ENCODE measurements at regions of chr16 and their contacts with region 1.

Region 1: GRCh38 chr16:89217388-89218191 is at the start of gene ZNF778:
- DNase-seq: peak; percentile 80
- ATAC-seq: peak; percentile 86
- H3K4me3 Mint-ChIP-seq: peak within 1 kb of the TSS; percentile 91
- H3K27ac Mint-ChIP-seq: peak within 1 kb of the TSS; percentile 93
- H3K4me1 Mint-ChIP-seq: peaks cover 19% of the 10 kb centered on the region
- H3K27me3 Mint-ChIP-seq: no peaks in the 10 kb centered on the region
- CTCF ChIP-seq: no peak
- total RNA-seq, gene ZNF778: 7.2 and 11.4 TPM in 2 replicates

Region 2: GRCh38 chr16:88633684-88634140 is 583.9 kb before region 1 on chr16:
- CTCF ChIA-PET with region 1: no interaction called
- POLR2A ChIA-PET with region 1: no interaction called
- intact Hi-C with region 1: loop called (anchors 10 kb)
- DNase-seq: peak; percentile 64
- ATAC-seq: peak; percentile 54
- H3K4me3 Mint-ChIP-seq: peak overlapping the region; percentile 76
- H3K27ac Mint-ChIP-seq: peak overlapping the region; percentile 71
- H3K4me1 Mint-ChIP-seq: peaks cover 46% of the 10 kb centered on the region
- H3K27me3 Mint-ChIP-seq: no peaks in the 10 kb centered on the region
- CTCF ChIP-seq: no peak

Region 3: DNA sequence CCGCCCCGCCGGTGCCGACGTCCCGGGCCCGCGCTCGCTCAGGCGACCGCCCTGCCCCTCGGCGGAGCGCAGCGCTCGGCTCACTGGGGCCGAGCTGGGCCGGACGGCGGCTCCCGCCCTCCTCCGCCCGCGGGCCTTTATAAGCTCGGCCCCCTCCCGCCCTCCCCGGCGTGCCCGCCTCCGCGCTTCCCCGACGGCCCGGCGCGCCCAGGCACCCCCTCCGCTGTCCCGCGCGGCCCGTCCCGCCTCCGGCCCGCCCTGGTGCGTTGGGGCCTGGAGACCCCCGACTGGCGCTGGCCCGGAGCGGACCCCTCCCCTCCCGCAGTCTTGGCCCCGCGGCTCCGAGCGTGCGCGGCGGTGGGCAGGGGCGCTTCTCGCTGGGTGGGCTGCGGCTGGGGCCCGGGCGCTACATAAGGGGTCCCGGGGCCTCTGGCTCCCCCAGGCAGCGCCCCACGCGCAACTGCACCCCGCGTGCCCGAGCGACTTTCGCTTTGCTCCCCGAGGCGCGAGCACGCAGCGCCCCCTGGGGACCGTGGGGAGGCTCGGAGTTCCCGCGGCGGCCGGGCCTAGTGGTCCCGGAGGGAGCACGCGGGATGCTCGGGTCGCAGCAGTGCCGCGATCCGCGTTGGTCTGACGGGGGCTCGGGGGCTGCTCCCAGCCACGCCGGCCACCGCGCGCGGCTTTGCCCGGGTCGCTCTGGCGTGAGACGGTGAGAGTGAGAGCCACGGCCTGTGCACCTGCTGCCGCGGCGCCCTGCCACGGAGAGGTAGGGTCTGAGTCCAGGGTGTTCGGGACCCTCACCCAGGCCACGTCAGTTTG is 432.3 kb before region 1 on chr16 and contains the start of gene PIEZO1:
- CTCF ChIA-PET with region 1: no interaction called
- POLR2A ChIA-PET with region 1: no interaction called
- intact Hi-C with region 1: loop called (anchors 2 kb)
- DNase-seq: peak; percentile 78
- ATAC-seq: peak; percentile 28
- H3K4me3 Mint-ChIP-seq: peak within 1 kb of the TSS; percentile 85
- H3K27ac Mint-ChIP-seq: peak within 1 kb of the TSS; percentile 76
- H3K4me1 Mint-ChIP-seq: peaks cover 47% of the 10 kb centered on the region
- H3K27me3 Mint-ChIP-seq: no peaks in the 10 kb centered on the region
- CTCF ChIP-seq: no peak
- total RNA-seq, gene PIEZO1: 75.2 and 85.9 TPM in 2 replicates

Region 4: DNA sequence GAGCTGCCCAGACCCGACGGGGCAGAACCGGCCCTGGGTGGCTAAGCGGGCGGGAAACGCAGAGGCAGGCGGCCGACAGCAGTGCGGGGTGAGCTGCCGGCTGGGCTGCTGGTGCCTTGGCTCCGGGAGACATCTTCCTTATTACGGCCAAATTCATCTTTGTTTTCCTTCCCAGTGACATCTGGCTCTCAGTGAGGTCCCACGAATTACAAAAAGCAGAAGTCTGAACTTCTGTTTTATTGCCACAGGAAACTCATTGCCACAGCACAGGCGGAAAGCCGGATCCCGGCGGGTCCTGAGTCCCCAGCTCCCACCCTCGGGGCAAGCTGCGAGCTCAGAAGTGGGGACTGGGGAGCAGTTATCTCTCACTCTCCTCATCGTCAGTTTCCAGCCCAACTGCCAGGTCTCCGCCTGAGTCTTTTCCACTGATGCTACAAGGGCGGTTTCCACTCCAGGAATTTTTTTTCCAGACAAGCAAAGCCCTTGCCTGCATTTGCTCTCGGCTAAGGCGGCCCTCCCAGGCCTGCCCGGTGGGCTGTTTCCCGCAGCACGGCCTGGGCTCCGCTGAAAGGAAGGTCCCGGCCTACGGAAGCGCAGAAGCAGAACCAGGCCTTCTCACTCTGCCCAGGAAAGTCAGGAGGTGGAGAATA is 280.9 kb before region 1 on chr16:
- CTCF ChIA-PET with region 1: interaction called, 5 read pairs
- POLR2A ChIA-PET with region 1: interaction called, 3 read pairs
- intact Hi-C with region 1: loop called (anchors 1 kb)
- DNase-seq: no peak
- ATAC-seq: peak; percentile 25
- H3K4me3 Mint-ChIP-seq: peak overlapping the region; percentile 76
- H3K27ac Mint-ChIP-seq: peak overlapping the region; percentile 84
- H3K4me1 Mint-ChIP-seq: peaks cover 46% of the 10 kb centered on the region
- H3K27me3 Mint-ChIP-seq: no peaks in the 10 kb centered on the region
- CTCF ChIP-seq: no peak

Region 5: GRCh38 chr16:89115216-89115861 is 102.3 kb before region 1 on chr16:
- CTCF ChIA-PET with region 1: no interaction called
- POLR2A ChIA-PET with region 1: no interaction called
- intact Hi-C with region 1: loop called (anchors 2 kb)
- DNase-seq: peak; percentile 64
- ATAC-seq: peak; percentile 84
- H3K4me3 Mint-ChIP-seq: peak overlapping the region; percentile 78
- H3K27ac Mint-ChIP-seq: peak overlapping the region; percentile 95
- H3K4me1 Mint-ChIP-seq: peaks cover 9% of the 10 kb centered on the region
- H3K27me3 Mint-ChIP-seq: no peaks in the 10 kb centered on the region
- CTCF ChIP-seq: no peak

Region 6: DNA sequence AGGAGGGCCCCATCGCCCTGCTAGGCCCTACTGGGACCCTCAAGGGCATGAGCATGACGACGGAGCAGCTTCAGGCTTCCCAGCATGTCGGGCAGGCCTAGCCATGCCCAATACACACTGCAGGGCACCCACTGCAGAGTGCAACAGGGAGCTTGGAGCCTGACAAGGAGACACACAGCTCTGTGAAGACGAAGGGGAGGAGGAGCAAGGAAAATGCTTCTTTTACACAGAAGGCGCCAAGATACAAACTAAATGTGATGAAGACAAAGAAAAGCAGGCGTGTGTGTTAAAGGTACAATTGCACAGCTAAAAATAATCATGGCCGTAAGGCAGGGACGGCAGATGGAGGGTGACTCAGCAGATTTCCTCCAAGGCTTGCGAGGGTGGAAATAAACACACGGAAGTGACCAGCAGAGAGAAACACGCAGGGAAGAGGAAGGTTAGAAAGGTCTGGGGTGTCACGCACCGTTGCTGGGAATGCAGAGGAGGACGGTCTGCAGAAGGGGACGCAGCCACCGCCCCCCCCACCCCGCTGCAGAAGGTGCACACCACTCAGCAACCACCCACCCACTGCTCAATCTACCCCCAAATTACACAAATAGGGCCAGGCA is 108.4 kb after region 1 on chr16:
- CTCF ChIA-PET with region 1: no interaction called
- POLR2A ChIA-PET with region 1: no interaction called
- intact Hi-C with region 1: no loop called
- DNase-seq: no peak
- ATAC-seq: peak; percentile 53
- H3K4me3 Mint-ChIP-seq: peak overlapping the region; percentile 2
- H3K27ac Mint-ChIP-seq: peak overlapping the region; percentile 8
- H3K4me1 Mint-ChIP-seq: peaks cover 75% of the 10 kb centered on the region
- H3K27me3 Mint-ChIP-seq: no peaks in the 10 kb centered on the region
- CTCF ChIP-seq: no peak